Heart right ventricle (tissue), 16 donors: ENCODE measurements at regions of chr15 and their contacts with region 1.

Region 1: DNA sequence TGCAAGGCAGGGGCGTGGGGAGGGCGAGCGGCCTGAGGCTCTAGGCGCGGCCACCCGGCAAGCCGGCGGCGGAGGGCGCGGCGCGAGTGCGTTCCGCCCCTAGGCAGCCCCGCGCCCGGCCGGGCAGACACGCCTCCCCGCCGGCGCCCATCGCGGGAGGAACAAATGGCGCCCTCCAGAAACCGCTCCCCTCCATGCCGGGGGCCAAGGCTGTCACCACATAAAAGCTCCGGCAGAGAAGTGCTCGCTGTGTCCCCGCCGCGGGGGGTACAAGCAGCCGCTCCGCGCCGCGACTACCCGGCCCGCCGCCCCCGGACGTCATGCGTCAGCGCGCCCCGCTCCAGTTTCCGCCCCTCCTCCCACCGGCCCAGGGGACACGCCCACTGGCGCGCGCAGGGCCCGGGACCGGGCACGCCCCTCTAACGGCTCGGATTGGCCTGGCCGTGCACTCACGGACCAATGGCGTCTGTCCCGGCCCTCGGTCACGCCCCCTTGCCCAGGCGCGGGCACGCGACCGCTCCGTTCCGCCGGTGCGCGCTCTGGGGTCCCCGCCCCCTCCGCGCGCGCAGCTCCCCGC is 391 bp upstream of the KLF13 start:
- DNase-seq: peak; percentile 99 to 100
- ATAC-seq: peak; percentile 88 to 95 (median 92)
- H3K4me3 ChIP-seq: peak overlapping the region; percentile 71 to 96 (median 92)
- H3K27ac ChIP-seq: peak overlapping the region; percentile 99 to 100 (median 100)
- H3K4me1 ChIP-seq: peaks cover 14 to 53% (median 38%) of the 10 kb centered on the region in 9 donors
- H3K27me3 ChIP-seq: no peaks in the 10 kb centered on the region
- CTCF ChIP-seq: no peak

Region 2: GRCh38 chr15:30991255-30992072 is 334.8 kb before region 1 on chr15 and contains the start of gene MTMR10:
- intact Hi-C with region 1: loop called in 1 of 10 experiments (anchors 10 kb)
- DNase-seq: peak; percentile 78 to 82
- ATAC-seq: peak; percentile 94 to 98 (median 96)
- H3K4me3 ChIP-seq: peak within 1 kb of the TSS; percentile 55 to 97 (median 94)
- H3K27ac ChIP-seq: peak within 1 kb of the TSS; percentile 80 to 99 (median 95)
- H3K4me1 ChIP-seq: peaks cover 0 to 51% (median 46%) of the 10 kb centered on the region in 9 donors
- H3K27me3 ChIP-seq: no peaks in the 10 kb centered on the region
- CTCF ChIP-seq: no peak
- total RNA-seq, gene MTMR10: 17.3 to 50.1 (median 30.2) TPM

Region 3: GRCh38 chr15:31215490-31216214 is 110.6 kb before region 1 on chr15:
- intact Hi-C with region 1: loop called in 9 of 10 experiments (anchors 1 to 10 kb)
- DNase-seq: peak; percentile 86 to 91
- ATAC-seq: peak; percentile 87 to 95 (median 90)
- H3K4me3 ChIP-seq: peak overlapping the region; percentile 5 to 77 (median 62)
- H3K27ac ChIP-seq: peak overlapping the region; percentile 86 to 99 (median 95)
- H3K4me1 ChIP-seq: peaks cover 6 to 70% (median 44%) of the 10 kb centered on the region in 9 donors
- H3K27me3 ChIP-seq: no peaks in the 10 kb centered on the region
- CTCF ChIP-seq: peak; percentile 86 to 99 (median 92)

Region 4: GRCh38 chr15:31236184-31237042 is 89.8 kb before region 1 on chr15:
- intact Hi-C with region 1: loop called in 4 of 10 experiments (anchors 5 kb)
- DNase-seq: peak; percentile 74 to 92
- ATAC-seq: peak; percentile 84 to 96 (median 94)
- H3K4me3 ChIP-seq: peak overlapping the region in 5 of 10 donors; percentile 14 to 30 (median 20)
- H3K27ac ChIP-seq: peak overlapping the region; percentile 69 to 97 (median 85)
- H3K4me1 ChIP-seq: peaks cover 12 to 50% (median 37%) of the 10 kb centered on the region in 9 donors
- H3K27me3 ChIP-seq: no peaks in the 10 kb centered on the region
- CTCF ChIP-seq: no peak

Region 5: GRCh38 chr15:31391687-31392671 is 65.7 kb after region 1 on chr15:
- intact Hi-C with region 1: loop called (anchors 1 to 10 kb)
- DNase-seq: peak; percentile 87 to 92
- ATAC-seq: peak; percentile 79 to 87 (median 84)
- H3K4me3 ChIP-seq: peak overlapping the region; percentile 51 to 74 (median 68)
- H3K27ac ChIP-seq: peak overlapping the region; percentile 89 to 99 (median 98)
- H3K4me1 ChIP-seq: peaks cover 0 to 39% (median 28%) of the 10 kb centered on the region in 9 donors
- H3K27me3 ChIP-seq: peaks cover 0 to 11% (median 0%) of the 10 kb centered on the region in 7 donors
- CTCF ChIP-seq: no peak

Region 6: DNA sequence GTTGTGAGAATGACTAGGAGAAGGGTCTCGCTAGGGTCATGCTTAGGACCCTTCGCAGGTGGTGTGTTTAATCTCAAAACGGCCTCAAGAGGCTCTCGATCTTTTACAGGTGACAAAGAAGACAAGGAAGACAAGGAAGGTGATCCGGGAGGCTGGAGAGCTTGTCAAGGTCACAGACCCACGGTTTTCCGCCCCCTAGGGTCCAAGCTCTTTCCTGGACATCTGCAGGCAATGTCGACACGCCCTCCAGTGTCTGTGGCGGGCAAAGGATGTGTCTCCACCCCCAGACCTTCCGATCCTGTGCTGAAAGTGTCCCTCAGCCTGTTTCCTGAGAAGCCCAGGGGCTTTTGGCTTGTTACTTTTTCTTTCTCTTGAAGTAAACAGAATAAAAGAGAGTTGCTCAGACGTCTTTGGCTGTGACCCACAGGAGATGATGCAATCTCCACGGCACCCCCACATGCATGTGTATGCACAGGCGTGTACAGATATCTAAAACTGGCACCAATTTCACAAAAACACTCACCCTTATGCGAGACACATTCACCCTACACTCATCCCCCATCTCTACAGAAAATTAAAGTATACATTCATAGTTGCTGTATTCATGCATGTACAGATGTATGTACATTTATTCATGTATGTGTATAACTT is 109.1 kb after region 1 on chr15:
- intact Hi-C with region 1: loop called in 5 of 10 experiments (anchors 1 to 10 kb)
- DNase-seq: peak; percentile 82 to 87
- ATAC-seq: peak; percentile 82 to 93 (median 89)
- H3K4me3 ChIP-seq: peak overlapping the region in 7 of 10 donors; percentile 3 to 47 (median 23)
- H3K27ac ChIP-seq: peak overlapping the region; percentile 12 to 83 (median 72)
- H3K4me1 ChIP-seq: peaks cover 2 to 50% (median 26%) of the 10 kb centered on the region in 9 donors
- H3K27me3 ChIP-seq: no peaks in the 10 kb centered on the region
- CTCF ChIP-seq: peak; percentile 56 to 94 (median 85)